ENCODE measurements at regions of chr5 and their contacts with region 1.

Region 1: GRCh38 chr5:171913987-171914273 is 92.5 kb downstream of the FBXW11 start:
- DNase-seq: no peak
- H3K4me3 ChIP-seq: no peak overlapping the region
- H3K27me3 ChIP-seq: no peaks in the 10 kb centered on the region
- CTCF ChIP-seq: no peak

Region 2: GRCh38 chr5:171660434-171660833 is 253.5 kb before region 1 on chr5:
- CTCF ChIA-PET with region 1: no interaction called
- POLR2A ChIA-PET with region 1: no interaction called
- DNase-seq: no peak
- H3K4me3 ChIP-seq: no peak overlapping the region
- H3K27me3 ChIP-seq: peaks cover 1% of the 10 kb centered on the region; the same call in 1 of the 2 replicates
- CTCF ChIP-seq: no peak

Region 3: DNA sequence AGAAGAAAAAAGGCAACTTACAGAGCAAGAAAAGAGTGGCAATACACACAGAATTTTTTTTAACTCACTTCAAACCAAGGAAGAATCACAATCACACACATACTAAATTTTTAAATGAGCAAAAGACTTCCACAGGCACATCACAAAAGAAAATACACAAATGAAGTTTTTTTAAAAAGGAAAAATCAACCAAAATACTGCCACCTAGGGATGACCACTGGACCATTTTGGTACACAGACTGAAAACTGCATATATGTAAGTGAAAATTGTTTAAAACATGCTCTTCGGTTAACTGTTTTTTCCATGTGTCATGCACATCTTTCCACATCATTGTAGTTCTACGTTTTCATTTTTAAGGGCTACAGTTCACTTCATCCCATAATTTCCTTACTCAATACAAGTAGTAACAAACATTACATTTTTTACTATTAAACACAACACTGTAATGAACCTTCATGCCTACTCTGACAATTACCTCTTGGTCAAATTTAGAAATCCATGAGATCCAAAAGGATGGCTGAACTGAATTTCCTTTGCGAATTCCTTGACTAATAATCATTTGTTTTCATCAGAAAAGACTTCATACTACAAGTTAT is 13.5 kb after region 1 on chr5:
- CTCF ChIA-PET with region 1: interaction called, 27 read pairs
- POLR2A ChIA-PET with region 1: no interaction called
- DNase-seq: no peak
- H3K4me3 ChIP-seq: no peak overlapping the region
- H3K27me3 ChIP-seq: no peaks in the 10 kb centered on the region
- CTCF ChIP-seq: peak; percentile 43; the same call in 1 of the 2 replicates

Region 4: GRCh38 chr5:172035039-172035438 is 121.1 kb after region 1 on chr5:
- CTCF ChIA-PET with region 1: interaction called, 63 read pairs
- POLR2A ChIA-PET with region 1: no interaction called
- DNase-seq: no peak
- H3K4me3 ChIP-seq: no peak overlapping the region
- H3K27me3 ChIP-seq: no peaks in the 10 kb centered on the region
- CTCF ChIP-seq: no peak

Region 5: GRCh38 chr5:172052450-172053236 is 138.7 kb after region 1 on chr5:
- CTCF ChIA-PET with region 1: interaction called, 12 read pairs
- POLR2A ChIA-PET with region 1: no interaction called
- DNase-seq: no peak
- H3K4me3 ChIP-seq: no peak overlapping the region
- H3K27me3 ChIP-seq: no peaks in the 10 kb centered on the region
- CTCF ChIP-seq: no peak

Region 6: GRCh38 chr5:172188033-172188892 is 274.3 kb after region 1 on chr5 and contains the start of gene STK10:
- CTCF ChIA-PET with region 1: interaction called, 21 read pairs
- POLR2A ChIA-PET with region 1: no interaction called
- DNase-seq: peak; percentile 64
- H3K4me3 ChIP-seq: peak within 1 kb of the TSS; percentile 90
- H3K27me3 ChIP-seq: no peaks in the 10 kb centered on the region
- CTCF ChIP-seq: peak; percentile 85
- polyA plus RNA-seq, gene STK10: 12.1 and 14.3 TPM in 2 replicates

Region 7: GRCh38 chr5:172496671-172497371 is 582.9 kb after region 1 on chr5:
- CTCF ChIA-PET with region 1: no interaction called
- POLR2A ChIA-PET with region 1: no interaction called
- DNase-seq: peak; percentile 3
- H3K4me3 ChIP-seq: no peak overlapping the region
- H3K27me3 ChIP-seq: peaks cover 14% of the 10 kb centered on the region
- CTCF ChIP-seq: no peak

Measured in BJ (cell line).